ENCODE measurements at regions of chr6 and their contacts with region 1.

Region 1: DNA sequence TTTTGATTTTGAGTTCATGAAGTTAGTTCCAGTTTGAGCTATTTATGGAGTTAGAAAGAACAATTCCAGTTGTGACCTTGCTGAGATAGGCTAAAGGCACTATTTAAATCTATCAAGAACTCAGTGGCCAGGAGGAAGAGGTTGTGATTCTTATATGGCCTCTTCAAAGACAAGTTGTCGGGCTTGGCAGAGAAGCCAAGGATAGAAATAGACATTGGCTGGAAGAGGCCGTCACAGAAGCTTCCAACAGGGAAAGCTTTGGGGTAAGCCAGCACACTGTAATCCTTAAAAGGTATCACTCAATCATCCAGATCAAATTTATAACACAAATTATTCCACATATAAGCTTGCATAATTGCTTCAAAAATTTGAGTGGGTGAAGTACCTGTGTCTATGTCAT is 286.1 kb downstream of the SYNE1 start:
- DNase-seq: no peak
- ATAC-seq: no peak
- H3K4me3 ChIP-seq: no peak overlapping the region
- H3K4me3 Mint-ChIP-seq: no peak overlapping the region
- H3K27ac ChIP-seq: no peak overlapping the region
- H3K27ac Mint-ChIP-seq: no peak overlapping the region
- H3K4me1 ChIP-seq: no peaks in the 10 kb centered on the region
- H3K4me1 Mint-ChIP-seq: no peaks in the 10 kb centered on the region
- H3K27me3 ChIP-seq: no peaks in the 10 kb centered on the region
- H3K27me3 Mint-ChIP-seq: no peaks in the 10 kb centered on the region
- CTCF ChIP-seq: no peak

Region 2: DNA sequence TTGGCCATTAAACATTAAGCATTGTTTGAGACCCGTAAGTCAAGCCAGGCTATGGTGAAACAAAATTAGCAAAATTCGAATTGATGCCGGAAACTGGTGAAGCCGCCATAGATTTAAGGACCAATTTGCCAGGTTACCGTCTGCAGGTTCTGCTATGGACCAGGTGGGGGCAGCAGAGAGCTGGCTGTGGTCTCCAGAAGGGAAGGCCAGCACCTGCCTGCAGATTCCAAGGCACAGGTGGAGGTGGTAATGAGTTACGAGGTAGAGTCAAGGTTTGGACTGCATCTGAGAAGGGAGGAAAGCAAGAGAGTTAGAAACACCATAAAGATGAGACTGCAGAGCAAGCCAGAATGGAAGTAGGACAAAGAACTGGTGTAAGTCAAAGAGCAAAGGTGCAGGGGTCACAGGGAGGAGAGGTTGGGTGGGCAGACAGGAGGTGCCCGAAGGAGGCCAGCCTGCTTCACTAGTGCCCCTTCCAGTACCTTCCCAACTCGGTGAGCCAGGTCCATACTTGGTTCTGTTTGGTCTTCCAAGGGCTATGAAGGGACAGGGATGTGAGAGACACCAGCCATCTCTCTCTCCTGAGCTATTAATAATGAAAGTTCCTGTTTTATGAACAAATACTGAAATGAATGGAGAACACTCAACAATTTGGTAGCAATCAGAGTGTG is 675.2 kb before region 1 on chr6:
- CTCF ChIA-PET with region 1: no interaction called
- POLR2A ChIA-PET with region 1: no interaction called
- intact Hi-C with region 1: loop called in 1 of 2 experiments (anchors 5 kb)
- DNase-seq: peak; percentile 16 to 78 (median 36)
- ATAC-seq: peak; percentile 88
- H3K4me3 ChIP-seq: no peak overlapping the region
- H3K4me3 Mint-ChIP-seq: no peak overlapping the region
- H3K27ac ChIP-seq: no peak overlapping the region
- H3K27ac Mint-ChIP-seq: no peak overlapping the region
- H3K4me1 ChIP-seq: no peaks in the 10 kb centered on the region
- H3K4me1 Mint-ChIP-seq: no peaks in the 10 kb centered on the region
- H3K27me3 ChIP-seq: no peaks in the 10 kb centered on the region
- H3K27me3 Mint-ChIP-seq: no peaks in the 10 kb centered on the region
- CTCF ChIP-seq: peak; percentile 87

Measured in CD4-positive, alpha-beta T cell (primary cell).